ENCODE measurements at regions of chr9 and their contacts with region 1.

Region 1: GRCh38 chr9:108671176-108671575 is 184.6 kb downstream of the ACTL7B start:
- DNase-seq: no peak
- ATAC-seq: no peak
- H3K4me3 ChIP-seq: no peak overlapping the region
- H3K4me1 ChIP-seq: no peaks in the 10 kb centered on the region
- CTCF ChIP-seq: no peak

Region 2: DNA sequence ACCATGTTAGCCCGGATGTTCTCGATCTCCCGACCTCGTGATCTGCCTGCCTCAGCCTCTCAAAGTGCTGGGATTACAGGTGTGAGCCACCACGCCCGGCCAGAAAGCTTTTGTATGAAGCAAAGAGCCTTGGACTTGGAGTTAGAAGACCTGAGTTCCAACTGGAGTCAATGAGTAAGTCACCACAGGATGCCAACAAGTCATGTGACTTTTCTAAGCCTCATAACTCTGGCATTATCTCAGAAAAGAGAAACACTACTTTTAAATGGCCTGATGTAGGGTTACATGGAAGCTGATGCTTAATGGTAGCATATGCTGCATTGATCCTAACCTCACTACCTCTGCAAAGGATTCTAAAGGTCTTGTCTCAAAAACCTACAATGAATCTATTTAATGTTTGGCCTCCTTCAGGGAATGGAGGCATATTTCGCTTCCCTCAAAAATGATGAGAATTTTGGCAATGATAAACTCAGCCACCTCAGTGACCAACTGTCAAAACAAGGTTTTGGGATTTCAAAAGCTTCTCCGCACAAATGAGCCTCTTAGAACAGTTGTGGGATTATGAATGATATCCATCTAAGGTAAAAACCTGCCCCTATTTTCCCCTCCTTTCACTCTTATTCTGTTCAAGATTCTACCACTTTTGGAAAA is 52.2 kb before region 1 on chr9:
- intact Hi-C with region 1: loop called in 1 of 2 experiments (anchors 10 kb)
- DNase-seq: no peak
- ATAC-seq: no peak
- H3K4me3 ChIP-seq: no peak overlapping the region
- H3K4me1 ChIP-seq: no peaks in the 10 kb centered on the region
- CTCF ChIP-seq: no peak

Region 3: GRCh38 chr9:108972626-108973209 is 301.5 kb after region 1 on chr9:
- intact Hi-C with region 1: no loop called
- DNase-seq: no peak
- ATAC-seq: no peak
- H3K4me3 ChIP-seq: no peak overlapping the region
- H3K4me1 ChIP-seq: no peaks in the 10 kb centered on the region
- CTCF ChIP-seq: no peak

Measured in mucosa of descending colon (tissue), 3 donors.